Mammary epithelial cell (primary cell): ENCODE measurements at regions of chr19 and their contacts with region 1.

Region 1: GRCh38 chr19:42606660-42607351 is 12.1 kb upstream of the CEACAM8 start:
- DNase-seq: peak; percentile 61
- H3K4me3 ChIP-seq: no peak overlapping the region
- H3K27ac ChIP-seq: no peak overlapping the region
- H3K4me1 ChIP-seq: no peaks in the 10 kb centered on the region
- H3K27me3 ChIP-seq: no peaks in the 10 kb centered on the region
- CTCF ChIP-seq: peak; percentile 94 to 95

Region 2: DNA sequence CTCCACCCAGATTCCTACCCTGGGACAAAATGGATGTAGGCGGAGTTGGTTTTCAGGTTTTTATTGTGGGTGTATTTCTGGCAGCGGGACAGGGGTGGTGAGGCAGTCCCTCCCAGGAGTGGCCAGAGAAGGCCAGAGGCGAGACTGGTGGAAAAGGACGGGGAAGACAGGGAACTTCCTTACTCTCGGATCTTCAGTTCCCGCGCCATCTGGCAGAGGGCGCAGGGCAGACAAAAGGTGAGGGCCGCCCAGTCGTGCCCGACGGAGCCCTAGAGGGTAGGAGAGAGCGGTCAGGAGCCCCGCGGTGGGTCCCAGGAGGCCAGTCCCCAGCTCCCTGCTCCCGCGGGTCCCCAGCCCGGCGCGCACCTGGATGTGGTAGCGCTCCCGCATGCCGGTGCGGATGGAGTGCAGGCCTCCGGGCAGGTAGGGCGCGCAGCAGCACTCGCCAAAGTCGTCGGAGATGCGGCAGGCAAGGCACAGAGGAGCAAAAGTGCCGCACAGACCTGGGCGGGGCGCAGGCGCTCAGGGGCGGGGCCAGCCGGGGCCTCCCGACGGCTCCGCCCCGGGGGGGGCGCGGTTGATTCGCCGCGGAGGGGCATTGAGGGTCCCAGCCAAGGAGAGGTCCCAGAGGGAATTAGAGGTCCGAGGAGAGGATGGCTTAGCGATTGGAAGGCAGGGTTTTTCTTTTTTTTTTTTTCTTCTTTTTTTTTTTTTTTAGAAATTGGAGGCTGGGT is 219.7 kb before region 1 on chr19:
- CTCF ChIA-PET with region 1: no interaction called
- dilution Hi-C with region 1: no loop called
- in situ Hi-C with region 1: no loop called
- intact Hi-C with region 1: no loop called
- DNase-seq: peak; percentile 83
- H3K4me3 ChIP-seq: peak overlapping the region; percentile 40 to 66 (median 61)
- H3K27ac ChIP-seq: peak overlapping the region; percentile 17
- H3K4me1 ChIP-seq: peaks cover 9% of the 10 kb centered on the region
- H3K27me3 ChIP-seq: peaks cover 4% of the 10 kb centered on the region
- CTCF ChIP-seq: peak; percentile 63 to 72

Region 3: DNA sequence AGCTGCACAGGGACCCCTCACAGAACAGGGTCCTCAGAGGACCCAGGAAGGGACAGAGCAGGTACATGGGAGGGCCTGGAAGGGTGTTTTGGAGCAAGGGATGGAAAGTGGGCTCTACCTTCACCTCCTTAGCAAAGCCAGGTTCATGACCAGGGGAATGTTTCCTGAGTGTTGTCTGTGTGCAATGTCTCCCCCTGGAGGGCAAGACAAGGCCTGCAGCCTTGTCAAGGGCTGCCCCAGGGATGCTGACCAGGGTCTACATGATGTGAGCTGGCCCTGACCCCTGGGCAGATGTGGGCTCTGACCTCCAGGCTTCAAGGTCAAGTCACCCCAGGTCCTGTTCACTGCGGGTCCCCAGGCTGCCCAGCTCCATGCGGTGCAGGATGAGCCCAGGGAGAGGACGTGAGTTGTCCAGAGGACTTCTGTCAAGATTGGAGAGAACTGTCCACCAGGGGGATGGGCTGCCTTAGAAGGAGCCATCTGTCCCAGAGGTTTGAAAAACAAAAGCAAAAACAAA is 77.5 kb before region 1 on chr19:
- CTCF ChIA-PET with region 1: no interaction called
- dilution Hi-C with region 1: no loop called
- in situ Hi-C with region 1: no loop called
- intact Hi-C with region 1: no loop called
- DNase-seq: peak; percentile 44
- H3K4me3 ChIP-seq: no peak overlapping the region
- H3K27ac ChIP-seq: no peak overlapping the region
- H3K4me1 ChIP-seq: peaks cover 21% of the 10 kb centered on the region
- H3K27me3 ChIP-seq: no peaks in the 10 kb centered on the region
- CTCF ChIP-seq: peak; percentile 92 to 97

Region 4: DNA sequence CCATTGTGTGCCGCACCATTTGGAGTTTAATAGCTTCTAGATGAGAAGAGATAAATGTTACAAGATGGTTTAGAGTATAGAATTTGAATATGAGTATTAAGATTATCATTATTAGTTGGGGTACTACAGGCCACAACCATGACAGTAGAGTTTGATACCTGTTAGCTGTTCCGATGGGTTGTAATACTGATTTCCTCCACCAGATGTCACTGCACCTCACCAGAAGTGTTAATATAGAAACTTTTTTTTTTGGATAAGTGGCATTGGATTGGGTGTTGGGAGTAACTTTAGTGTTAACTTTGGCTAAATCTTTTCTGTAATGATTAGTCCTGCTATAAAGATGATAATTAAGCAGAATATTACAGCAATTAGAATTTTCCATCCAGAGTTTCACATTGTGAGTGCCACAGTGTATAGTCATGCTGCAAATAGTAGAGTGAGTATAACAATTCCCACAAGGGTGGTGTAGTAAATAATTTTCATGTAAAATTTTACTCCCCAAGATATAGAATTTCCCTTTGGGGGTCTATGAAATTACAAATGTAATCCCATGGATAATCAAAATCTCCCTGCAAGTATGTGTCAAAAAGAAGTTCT is 77.2 kb after region 1 on chr19:
- CTCF ChIA-PET with region 1: no interaction called
- dilution Hi-C with region 1: no loop called
- in situ Hi-C with region 1: no loop called
- intact Hi-C with region 1: loop called (anchors 5 kb)
- DNase-seq: peak; percentile 11
- H3K4me3 ChIP-seq: no peak overlapping the region
- H3K27ac ChIP-seq: no peak overlapping the region
- H3K4me1 ChIP-seq: no peaks in the 10 kb centered on the region
- H3K27me3 ChIP-seq: peaks cover 3% of the 10 kb centered on the region
- CTCF ChIP-seq: peak; percentile 69 to 73

Region 5: GRCh38 chr19:42762782-42763181 is 156.0 kb after region 1 on chr19:
- CTCF ChIA-PET with region 1: no interaction called
- dilution Hi-C with region 1: no loop called
- in situ Hi-C with region 1: no loop called
- intact Hi-C with region 1: loop called (anchors 2 kb)
- DNase-seq: peak; percentile 32
- H3K4me3 ChIP-seq: no peak overlapping the region
- H3K27ac ChIP-seq: peak overlapping the region; percentile 22
- H3K4me1 ChIP-seq: peaks cover 18% of the 10 kb centered on the region
- H3K27me3 ChIP-seq: no peaks in the 10 kb centered on the region
- CTCF ChIP-seq: no peak